ENCODE measurements at regions of chr13 and their contacts with region 1.

Region 1: GRCh38 chr13:94667190-94667589 is 45.2 kb downstream of the SOX21 start:
- DNase-seq: no peak
- H3K4me3 Mint-ChIP-seq: peak overlapping the region; percentile 66
- H3K27ac Mint-ChIP-seq: peak overlapping the region; percentile 94
- H3K4me1 Mint-ChIP-seq: peaks cover 50% of the 10 kb centered on the region
- H3K27me3 Mint-ChIP-seq: peaks cover 8% of the 10 kb centered on the region

Region 2: DNA sequence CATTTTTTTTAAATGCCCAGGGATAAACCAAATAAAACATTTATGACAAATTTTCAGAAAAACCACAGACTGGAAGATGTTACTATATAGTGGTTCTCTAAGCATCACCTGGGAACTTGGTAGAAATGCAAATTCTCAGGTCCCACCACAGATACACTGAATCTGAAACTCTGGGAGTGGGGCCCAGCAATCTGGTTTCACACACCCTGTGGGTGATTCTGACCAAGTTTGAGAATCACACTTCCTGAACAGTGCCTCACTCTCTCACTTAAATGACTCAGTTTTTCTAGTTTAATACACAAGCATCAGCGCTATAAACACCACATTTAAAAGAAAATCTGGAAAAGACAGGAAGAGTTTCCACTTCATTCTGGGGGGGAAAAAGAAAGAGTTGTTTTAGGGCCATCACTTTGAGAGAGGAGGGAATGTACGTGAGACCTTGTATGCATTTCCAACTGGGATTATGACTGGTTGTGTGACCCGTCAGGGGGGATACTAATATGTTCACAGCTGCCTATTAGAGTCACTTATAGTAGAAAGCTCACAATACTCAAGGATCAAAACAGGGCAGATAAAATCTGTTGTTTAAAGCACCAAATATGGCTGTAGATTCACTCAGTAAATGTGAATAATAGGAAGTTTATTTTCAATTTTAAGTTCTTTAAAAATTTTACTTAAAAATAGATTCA is 872.8 kb before region 1 on chr13:
- intact Hi-C with region 1: loop called (anchors 5 kb)
- DNase-seq: peak; percentile 5
- H3K4me3 Mint-ChIP-seq: no peak overlapping the region
- H3K27ac Mint-ChIP-seq: peak overlapping the region; percentile 59
- H3K4me1 Mint-ChIP-seq: peaks cover 10% of the 10 kb centered on the region
- H3K27me3 Mint-ChIP-seq: peaks cover 5% of the 10 kb centered on the region

Region 3: GRCh38 chr13:94317063-94317491 is 350.1 kb before region 1 on chr13:
- intact Hi-C with region 1: loop called (anchors 5 kb)
- DNase-seq: peak; percentile 13
- H3K4me3 Mint-ChIP-seq: peak overlapping the region; percentile 44
- H3K27ac Mint-ChIP-seq: peak overlapping the region; percentile 86
- H3K4me1 Mint-ChIP-seq: peaks cover 80% of the 10 kb centered on the region
- H3K27me3 Mint-ChIP-seq: no peaks in the 10 kb centered on the region

Region 4: DNA sequence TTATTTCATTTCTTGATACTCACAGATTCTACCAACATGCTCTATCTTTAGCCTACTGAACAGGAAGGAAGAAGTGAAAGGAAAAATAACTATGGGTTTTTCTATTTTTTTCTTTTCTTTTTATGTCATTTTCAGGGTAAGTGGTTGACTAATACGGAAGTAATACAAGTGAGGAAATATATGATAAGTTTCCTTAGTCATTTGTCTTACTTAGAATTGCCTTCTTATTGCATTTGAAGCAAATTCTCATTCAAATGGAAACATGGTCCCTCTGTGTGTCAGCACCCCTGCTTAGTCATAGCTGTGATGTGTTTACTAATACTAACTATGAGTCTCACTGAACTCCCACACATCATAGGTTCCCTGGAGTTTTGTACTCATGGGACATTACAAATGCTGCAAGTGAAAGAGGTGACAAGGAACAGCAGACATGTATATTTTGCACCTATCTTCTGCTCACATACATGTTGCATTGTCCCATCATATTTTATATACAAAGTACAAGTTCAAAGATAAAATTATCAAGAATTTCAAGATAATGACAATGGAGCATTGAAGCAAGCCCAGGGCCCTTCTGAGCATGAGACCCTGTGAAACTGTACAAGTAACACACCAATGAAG is 247.8 kb before region 1 on chr13:
- intact Hi-C with region 1: loop called (anchors 1 kb)
- DNase-seq: no peak
- H3K4me3 Mint-ChIP-seq: peak overlapping the region; percentile 29
- H3K27ac Mint-ChIP-seq: peak overlapping the region; percentile 72
- H3K4me1 Mint-ChIP-seq: peaks cover 22% of the 10 kb centered on the region
- H3K27me3 Mint-ChIP-seq: no peaks in the 10 kb centered on the region

Region 5: DNA sequence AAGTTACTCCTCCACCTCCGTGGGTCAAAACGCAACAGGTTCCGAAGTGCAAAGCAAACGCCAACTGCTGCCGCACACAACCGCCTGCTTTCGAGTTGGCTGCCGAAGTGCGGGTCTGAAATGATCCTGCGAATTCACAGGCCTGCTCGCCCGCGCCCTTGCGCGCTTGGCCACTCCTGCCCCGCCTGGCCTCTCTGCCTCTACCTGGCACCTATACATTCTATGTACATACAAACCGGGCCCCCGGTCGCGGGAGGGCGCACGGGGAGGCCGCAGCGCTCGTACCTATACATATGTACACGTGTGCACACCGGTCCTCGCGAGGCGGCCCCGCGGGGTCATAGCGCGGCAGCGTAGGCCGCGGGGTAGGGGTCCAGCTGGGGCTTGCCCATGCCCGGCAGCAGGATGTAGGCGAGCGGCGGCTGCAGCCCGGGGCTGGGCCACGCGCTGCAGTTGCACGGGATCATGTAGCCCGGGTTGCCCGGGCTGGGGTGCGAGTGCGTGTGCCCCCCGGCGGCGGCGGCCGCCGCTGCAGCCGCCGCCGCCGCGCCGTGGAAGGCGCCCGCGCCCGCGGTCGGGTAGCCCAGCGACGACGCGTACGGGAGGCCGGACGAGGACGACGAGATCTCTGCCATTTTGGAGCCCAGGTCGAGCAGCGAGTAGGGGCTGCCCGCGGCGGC is 43.8 kb after region 1 on chr13:
- intact Hi-C with region 1: loop called (anchors 2 kb)
- DNase-seq: no peak
- H3K4me3 Mint-ChIP-seq: no peak overlapping the region
- H3K27ac Mint-ChIP-seq: peak overlapping the region; percentile 73
- H3K4me1 Mint-ChIP-seq: peaks cover 10% of the 10 kb centered on the region
- H3K27me3 Mint-ChIP-seq: peaks cover 73% of the 10 kb centered on the region

Region 6: DNA sequence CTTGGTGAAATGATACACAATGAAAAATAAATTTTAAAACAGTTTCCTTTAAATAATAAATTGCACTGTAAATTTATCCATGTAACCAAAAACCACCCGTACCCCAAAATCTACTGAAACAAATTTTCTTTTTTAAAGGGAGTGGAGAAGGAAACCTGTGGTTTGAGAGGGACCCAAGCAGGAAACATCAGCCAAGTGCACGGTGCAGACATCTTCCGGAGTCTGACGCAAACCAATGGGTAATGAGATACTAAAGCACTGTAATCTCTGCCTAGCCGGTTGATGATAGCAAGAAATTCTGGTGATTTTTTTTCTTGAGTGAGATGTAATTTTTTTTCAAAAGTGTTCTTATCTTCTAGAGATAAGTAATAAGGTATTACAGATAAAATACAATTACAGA is 518.7 kb after region 1 on chr13:
- intact Hi-C with region 1: loop called (anchors 2 kb)
- DNase-seq: peak; percentile 48
- H3K4me3 Mint-ChIP-seq: peak overlapping the region; percentile 34
- H3K27ac Mint-ChIP-seq: peak overlapping the region; percentile 37
- H3K4me1 Mint-ChIP-seq: peaks cover 53% of the 10 kb centered on the region
- H3K27me3 Mint-ChIP-seq: no peaks in the 10 kb centered on the region

Measured in activated T-helper 1 cell treated with anti-CD3 and anti-CD28 coated beads, Interleukin-12 subunit alpha, Interleukin-12 subunit beta, Interleukin-2, Interleukin-4 antibody, amounts not matched to agents 30 ng/mL and 10 ng/mL and 1 ng/mL, durations not matched to agents 14 hours and 24 hours and 36 hours (primary cell).